ENCODE measurements at regions of chr1 and their contacts with region 1.

Region 1: GRCh38 chr1:39538588-39539465 is 37.8 kb downstream of the PABPC4 start:
- DNase-seq: peak; percentile 76
- ATAC-seq: peak; percentile 84 to 87

Region 2: DNA sequence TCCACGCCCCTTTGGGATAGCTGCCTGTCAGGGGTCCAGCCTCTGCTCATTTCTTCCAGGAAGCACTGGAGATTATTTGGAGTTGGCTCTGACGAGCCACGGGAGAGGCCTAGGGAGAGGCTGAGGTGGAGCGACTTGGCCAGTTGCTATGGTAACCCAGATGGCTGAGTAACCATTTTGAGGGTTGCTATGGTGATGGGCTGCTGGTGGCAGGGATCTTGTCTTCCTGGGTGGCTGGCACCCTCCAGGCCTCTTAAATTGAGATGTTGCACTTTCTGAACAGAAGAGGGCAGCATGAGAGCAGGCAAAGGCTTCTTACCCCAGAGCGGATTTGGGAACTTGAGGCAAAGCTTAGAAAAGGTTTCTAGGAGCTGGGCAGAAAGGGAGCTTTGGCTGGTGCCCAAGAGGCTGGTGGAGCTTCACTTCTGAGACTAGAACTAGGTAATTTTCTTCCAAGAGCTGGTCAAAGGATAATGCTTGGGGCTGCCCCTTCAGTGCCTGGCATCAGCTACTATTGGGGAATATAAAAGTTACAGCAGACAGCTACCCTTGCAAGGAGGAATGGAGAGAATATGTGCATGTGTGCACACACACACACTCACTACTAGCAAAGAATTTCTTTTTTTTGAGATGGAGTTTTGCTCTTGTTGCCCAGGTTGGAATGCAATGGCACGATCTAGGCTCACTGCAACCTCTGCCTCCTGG is 440.1 kb before region 1 on chr1:
- intact Hi-C with region 1: loop called in 1 of 2 experiments (anchors 5 kb)
- DNase-seq: peak; percentile 63
- ATAC-seq: peak; percentile 68 to 73

Region 3: GRCh38 chr1:39158327-39159086 is 380.3 kb before region 1 on chr1:
- intact Hi-C with region 1: no loop called
- DNase-seq: no peak
- ATAC-seq: peak in 1 of 2 donors; percentile 16

Region 4: DNA sequence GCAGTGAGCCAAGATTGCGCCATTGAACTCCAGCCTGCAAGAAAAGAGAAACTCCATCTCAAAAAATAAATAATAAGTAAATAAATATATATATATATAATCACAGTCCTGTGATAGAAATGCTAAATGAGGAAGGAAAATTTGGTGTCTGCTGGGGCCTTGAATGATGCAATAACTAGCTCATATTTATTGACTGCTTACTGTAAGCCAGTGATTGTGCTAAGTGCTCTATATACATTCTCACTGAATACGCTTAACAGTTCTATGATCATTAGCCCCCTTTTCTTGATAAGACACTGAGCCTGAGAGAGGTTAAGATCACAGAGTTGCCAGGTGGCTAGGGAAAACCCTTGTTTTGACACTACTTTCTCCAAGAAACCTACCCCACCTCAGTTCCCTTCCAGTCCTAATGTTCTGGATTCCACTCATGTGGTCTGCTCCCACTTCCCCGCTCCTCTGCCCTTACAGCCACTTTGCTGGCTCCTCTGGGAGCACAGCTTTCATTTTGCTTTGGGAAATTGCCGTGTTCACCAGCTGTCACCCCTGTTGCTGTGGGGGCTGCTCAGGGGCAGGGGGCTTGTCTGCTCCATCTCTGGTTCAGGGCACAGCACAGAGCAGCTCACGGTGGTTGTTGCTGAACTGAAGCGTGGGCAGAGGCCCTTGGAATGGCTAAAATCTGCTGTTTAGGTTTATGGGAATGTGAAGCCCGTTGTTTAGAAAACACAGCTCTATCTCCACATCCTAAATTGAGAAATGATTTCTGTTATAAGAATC is 49.8 kb before region 1 on chr1:
- intact Hi-C with region 1: loop called in 1 of 2 experiments (anchors 10 kb)
- DNase-seq: no peak
- ATAC-seq: no peak

Region 5: DNA sequence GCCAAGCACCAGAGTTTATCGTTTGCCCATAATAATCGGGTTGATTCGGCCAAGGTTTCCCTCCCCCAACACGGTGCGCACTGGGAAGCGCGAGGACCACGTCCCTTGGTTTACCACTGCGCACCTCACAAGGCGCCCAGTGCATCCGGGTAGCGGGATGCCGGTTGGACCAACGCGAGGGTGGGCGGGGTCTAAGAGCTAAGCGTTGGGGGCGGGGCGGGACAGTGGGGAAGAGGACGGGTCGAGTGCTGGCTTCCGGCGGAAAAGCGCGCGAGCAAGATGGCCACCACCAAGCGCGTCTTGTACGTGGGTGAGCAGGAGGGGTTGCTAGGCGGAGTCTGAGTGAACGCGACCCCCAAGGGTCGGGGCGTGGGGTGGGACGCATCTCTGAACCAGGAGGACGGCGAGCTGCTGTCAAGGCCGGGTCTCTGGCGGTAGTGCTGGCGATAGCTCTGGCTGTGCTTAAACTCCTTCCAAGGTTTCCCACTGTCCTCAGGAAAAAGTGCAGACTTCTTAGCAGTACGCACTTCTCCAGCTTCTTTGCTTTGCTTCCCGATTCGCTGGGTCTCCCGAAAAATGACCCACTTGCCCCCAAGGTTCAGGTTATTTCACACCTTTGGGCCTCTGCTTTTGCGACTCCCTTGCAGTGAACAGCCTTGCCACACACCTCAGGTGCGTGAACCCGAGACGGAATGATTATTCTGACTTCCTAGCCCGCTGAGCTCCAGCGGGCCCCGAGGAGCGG is 200.0 kb after region 1 on chr1 and contains the start of gene PPIE:
- intact Hi-C with region 1: no loop called
- DNase-seq: peak; percentile 97
- ATAC-seq: peak; percentile 99
- total RNA-seq, gene PPIE: 26.4 to 30.8 TPM

Region 6: GRCh38 chr1:40862008-40862863 is 1323.4 kb after region 1 on chr1 and contains the start of gene CITED4:
- intact Hi-C with region 1: no loop called
- DNase-seq: peak; percentile 96
- ATAC-seq: peak; percentile 95 to 97
- total RNA-seq, gene CITED4: 22.9 to 26.5 TPM

Measured in left cardiac atrium (tissue), 4 donors.